Heart right ventricle (tissue), 16 donors: ENCODE measurements at regions of chr9 and their contacts with region 1.

Region 1: GRCh38 chr9:97710356-97711222 is 13.4 kb upstream of the XPA start:
- DNase-seq: peak in 1 of 2 donors; percentile 34
- ATAC-seq: peak; percentile 55 to 89 (median 86)
- H3K4me3 ChIP-seq: no peak overlapping the region
- H3K27ac ChIP-seq: no peak overlapping the region
- H3K4me1 ChIP-seq: peaks cover 0 to 3% (median 0%) of the 10 kb centered on the region in 9 donors
- H3K27me3 ChIP-seq: peaks cover 0 to 44% (median 11%) of the 10 kb centered on the region in 7 donors
- CTCF ChIP-seq: peak; percentile 63 to 91 (median 87)

Region 2: GRCh38 chr9:97299809-97300414 is 410.7 kb before region 1 on chr9:
- intact Hi-C with region 1: no loop called
- DNase-seq: no peak
- ATAC-seq: no peak
- H3K4me3 ChIP-seq: no peak overlapping the region
- H3K27ac ChIP-seq: no peak overlapping the region
- H3K4me1 ChIP-seq: peaks cover 0 to 13% (median 6%) of the 10 kb centered on the region in 9 donors
- H3K27me3 ChIP-seq: no peaks in the 10 kb centered on the region
- CTCF ChIP-seq: no peak

Region 3: DNA sequence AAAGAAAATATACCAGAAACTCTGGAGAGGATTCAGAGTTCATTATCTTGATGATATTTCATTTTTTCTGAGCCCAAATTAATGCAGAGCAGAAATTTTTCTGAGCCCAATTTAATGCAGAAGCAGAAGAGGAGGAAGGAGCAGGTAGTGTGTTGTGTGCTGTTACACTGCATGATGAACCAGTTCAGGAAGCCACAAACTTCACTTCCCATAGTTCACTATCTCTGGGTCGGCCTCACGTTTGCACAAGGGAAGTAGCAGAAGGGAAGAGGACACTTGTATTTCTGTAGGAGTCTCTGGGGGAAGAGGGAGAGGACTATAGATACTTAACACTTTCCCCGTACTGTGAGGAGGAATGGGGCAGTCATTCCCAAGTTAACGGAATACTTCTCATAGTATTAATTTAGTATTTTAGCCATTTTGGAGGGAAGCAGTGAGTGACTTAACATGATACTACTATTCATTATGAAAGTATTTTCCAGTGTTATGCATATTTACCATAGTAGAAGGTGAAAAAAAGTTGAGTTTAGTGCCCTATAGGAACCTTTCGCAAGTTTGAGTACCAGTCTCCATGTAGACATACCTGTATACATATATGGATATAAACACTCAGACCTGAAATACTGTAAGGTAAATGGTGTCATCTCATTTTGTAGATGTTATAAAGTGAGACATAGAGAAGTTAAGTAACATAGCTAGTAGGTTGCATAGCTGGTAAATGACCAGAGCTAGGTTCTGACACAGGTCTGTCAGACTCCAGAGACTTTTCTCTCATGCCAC is 43.5 kb before region 1 on chr9:
- intact Hi-C with region 1: no loop called
- DNase-seq: no peak
- ATAC-seq: peak in 1 of 8 donors; percentile 24
- H3K4me3 ChIP-seq: no peak overlapping the region
- H3K27ac ChIP-seq: no peak overlapping the region
- H3K4me1 ChIP-seq: peaks cover 0 to 10% (median 0%) of the 10 kb centered on the region in 9 donors
- H3K27me3 ChIP-seq: no peaks in the 10 kb centered on the region
- CTCF ChIP-seq: no peak

Region 4: GRCh38 chr9:97803167-97804058 is 92.8 kb after region 1 on chr9:
- intact Hi-C with region 1: loop called in 1 of 10 experiments (anchors 5 kb)
- DNase-seq: peak; percentile 12 to 75
- ATAC-seq: peak; percentile 72 to 98 (median 86)
- H3K4me3 ChIP-seq: peak overlapping the region in 9 of 10 donors; percentile 4 to 60 (median 44)
- H3K27ac ChIP-seq: no peak overlapping the region
- H3K4me1 ChIP-seq: peaks cover 0 to 10% (median 7%) of the 10 kb centered on the region in 9 donors
- H3K27me3 ChIP-seq: peaks cover 12 to 89% (median 54%) of the 10 kb centered on the region in 7 donors
- CTCF ChIP-seq: peak in 1 of 9 donors; percentile 12

Region 5: DNA sequence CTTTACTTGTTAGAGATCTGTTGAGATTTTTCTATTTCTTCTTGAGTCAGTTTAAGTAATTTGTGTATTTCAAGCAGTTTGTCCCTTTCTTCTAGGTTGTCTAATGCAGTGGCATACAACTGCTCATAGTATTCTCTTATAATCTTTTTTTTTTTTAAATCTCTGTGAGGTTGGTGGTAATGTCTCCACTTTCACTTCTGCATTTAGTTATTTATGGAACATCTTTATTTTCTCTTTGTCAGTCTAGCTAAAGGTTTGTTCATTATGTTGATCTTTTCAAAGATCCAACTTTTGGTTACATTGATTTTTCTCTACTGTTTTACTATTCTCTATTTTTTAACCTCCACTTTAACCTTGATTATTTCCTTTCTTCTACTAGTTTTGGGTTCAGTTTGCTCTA is 156.3 kb after region 1 on chr9:
- intact Hi-C with region 1: loop called in 1 of 10 experiments (anchors 10 kb)
- DNase-seq: no peak
- ATAC-seq: no peak
- H3K4me3 ChIP-seq: no peak overlapping the region
- H3K27ac ChIP-seq: no peak overlapping the region
- H3K4me1 ChIP-seq: no peaks in the 10 kb centered on the region
- H3K27me3 ChIP-seq: peaks cover 0 to 55% (median 36%) of the 10 kb centered on the region in 7 donors
- CTCF ChIP-seq: no peak

Region 6: DNA sequence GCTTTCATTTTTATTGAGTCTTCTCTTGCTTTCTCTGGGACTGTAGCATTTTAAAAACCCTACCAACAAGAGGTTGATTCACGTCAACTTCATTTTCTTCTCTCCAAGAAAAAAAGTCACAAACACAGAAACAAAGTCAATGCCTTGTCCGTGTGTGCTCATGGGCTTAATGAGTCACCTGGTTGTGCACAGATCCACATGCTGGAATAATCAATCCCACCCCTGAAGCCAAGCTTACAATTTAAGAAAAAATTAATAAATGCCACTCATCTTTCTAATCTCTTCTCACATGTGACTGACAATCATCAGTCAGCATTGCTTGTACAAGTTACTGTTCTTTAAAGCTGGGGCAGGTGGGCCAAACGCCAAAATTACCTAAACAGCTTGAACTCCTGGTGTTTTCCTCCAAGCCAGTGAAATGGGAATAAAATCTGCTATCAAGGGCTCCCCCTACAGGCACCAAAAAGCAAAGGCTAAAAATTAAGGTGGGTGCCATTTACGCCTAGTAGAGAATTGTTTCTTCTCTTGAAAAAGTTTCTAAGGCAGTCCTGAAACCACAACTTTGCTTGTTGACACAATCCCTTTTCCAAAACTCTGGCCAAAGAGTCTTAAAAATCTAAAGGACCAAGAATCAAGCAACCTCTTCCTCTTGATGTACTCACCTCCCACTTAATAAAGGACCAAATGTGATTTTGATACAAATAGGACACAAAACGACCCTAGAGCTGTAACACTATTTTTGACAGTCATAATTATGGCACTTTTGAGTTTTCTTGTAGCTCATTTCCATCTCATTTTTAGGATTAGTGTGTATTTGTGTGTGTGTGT is 190.4 kb after region 1 on chr9:
- intact Hi-C with region 1: loop called (anchors 1 to 5 kb)
- DNase-seq: no peak
- ATAC-seq: peak in 1 of 8 donors; percentile 46
- H3K4me3 ChIP-seq: no peak overlapping the region
- H3K27ac ChIP-seq: no peak overlapping the region
- H3K4me1 ChIP-seq: peaks cover 0 to 32% (median 1%) of the 10 kb centered on the region in 9 donors
- H3K27me3 ChIP-seq: no peaks in the 10 kb centered on the region
- CTCF ChIP-seq: peak in 8 of 9 donors; percentile 48 to 75 (median 72)

Region 7: DNA sequence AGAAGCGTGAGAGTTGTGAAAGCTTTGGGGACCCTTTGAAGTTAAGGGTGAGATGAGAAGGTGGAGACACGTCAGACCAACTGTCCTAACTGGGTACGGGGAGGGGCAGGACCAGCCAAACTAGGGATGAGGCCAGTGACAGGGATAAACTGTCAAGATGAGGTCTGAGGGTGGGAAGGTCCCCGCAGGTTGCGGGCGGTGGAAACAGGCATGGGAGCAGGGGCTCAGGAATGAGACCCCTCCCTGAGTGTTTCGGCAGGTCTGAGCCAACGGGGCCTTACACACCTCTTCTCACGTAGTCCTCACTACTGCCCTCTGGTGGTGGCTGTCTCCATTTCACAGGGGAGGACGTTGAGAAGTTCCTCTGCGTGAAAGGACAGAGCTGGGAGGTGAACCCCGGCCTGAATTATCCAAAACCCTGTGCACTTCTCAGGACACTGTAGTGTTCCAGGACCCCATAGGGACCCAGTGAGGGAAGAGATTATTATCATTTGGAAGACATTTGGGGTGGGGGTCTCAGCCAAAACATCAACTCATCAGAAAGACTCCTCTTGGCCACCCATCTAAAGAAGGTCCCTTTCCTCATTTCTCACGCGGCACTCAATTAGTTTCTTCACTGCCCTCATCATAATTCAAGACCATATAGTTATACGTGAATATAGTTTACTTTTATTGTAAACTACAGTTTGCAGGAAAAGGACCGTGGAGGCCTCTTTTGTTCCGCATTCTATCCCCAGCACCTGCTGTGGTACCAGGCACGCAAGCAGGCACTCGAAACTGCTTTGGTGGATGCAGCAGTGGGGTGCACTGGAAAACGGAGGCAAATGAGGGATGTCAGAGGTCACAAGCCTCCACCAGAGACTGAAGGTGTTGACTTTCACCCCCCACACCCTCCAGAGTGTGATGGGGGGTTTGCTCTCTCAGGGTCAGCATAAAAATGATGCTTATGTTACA is 324.3 kb after region 1 on chr9:
- intact Hi-C with region 1: loop called in 1 of 10 experiments (anchors 10 kb)
- DNase-seq: peak; percentile 75 to 88
- ATAC-seq: peak; percentile 80 to 92 (median 86)
- H3K4me3 ChIP-seq: peak overlapping the region in 3 of 10 donors; percentile 7 to 22 (median 22)
- H3K27ac ChIP-seq: no peak overlapping the region
- H3K4me1 ChIP-seq: peaks cover 0 to 22% (median 15%) of the 10 kb centered on the region in 9 donors
- H3K27me3 ChIP-seq: no peaks in the 10 kb centered on the region
- CTCF ChIP-seq: peak; percentile 69 to 92 (median 89)